ENCODE measurements at regions of chr4 and their contacts with region 1.

Region 1: GRCh38 chr4:151362404-151363164 is 37.2 kb upstream of the SH3D19 start:
- DNase-seq: peak; percentile 89
- H3K4me3 ChIP-seq: no peak overlapping the region
- H3K27ac ChIP-seq: no peak overlapping the region
- H3K4me1 ChIP-seq: peaks cover 3% of the 10 kb centered on the region
- H3K27me3 ChIP-seq: no peaks in the 10 kb centered on the region
- CTCF ChIP-seq: peak; percentile 98

Region 2: DNA sequence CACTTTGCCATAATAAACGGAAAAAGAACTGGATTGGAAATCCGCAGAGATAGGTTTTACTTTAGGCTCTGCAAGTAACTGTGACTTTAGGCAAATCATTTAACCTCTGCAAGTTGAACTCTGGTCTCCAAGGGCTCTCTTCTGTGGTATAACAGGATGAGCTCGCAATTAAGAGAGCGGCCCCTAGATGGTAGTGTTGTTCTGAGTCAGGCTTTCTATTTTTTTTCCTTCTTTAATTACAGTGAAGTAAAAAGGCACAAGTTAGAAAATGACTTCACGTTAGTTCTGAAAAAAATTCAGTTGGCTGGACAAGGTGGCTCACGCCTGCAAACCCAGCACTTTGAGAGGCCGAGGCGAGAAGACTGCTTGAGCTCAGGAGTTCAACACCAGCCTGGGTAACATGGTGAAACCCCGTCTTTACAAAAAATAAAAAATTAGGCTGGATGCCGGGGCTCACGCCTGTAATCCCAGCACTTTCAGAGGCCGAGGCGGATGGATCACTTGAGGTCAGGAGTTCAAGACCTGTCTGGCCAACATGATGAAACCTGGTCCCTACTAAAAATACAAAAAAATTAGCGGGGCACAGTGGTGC is 245.1 kb before region 1 on chr4:
- intact Hi-C with region 1: loop called (anchors 5 kb)
- DNase-seq: peak; percentile 64
- H3K4me3 ChIP-seq: no peak overlapping the region
- H3K27ac ChIP-seq: no peak overlapping the region
- H3K4me1 ChIP-seq: no peaks in the 10 kb centered on the region
- H3K27me3 ChIP-seq: no peaks in the 10 kb centered on the region
- CTCF ChIP-seq: peak; percentile 74

Region 3: GRCh38 chr4:151184523-151185458 is 177.8 kb before region 1 on chr4:
- intact Hi-C with region 1: no loop called
- DNase-seq: no peak
- H3K4me3 ChIP-seq: no peak overlapping the region
- H3K27ac ChIP-seq: no peak overlapping the region
- H3K4me1 ChIP-seq: no peaks in the 10 kb centered on the region
- H3K27me3 ChIP-seq: no peaks in the 10 kb centered on the region
- CTCF ChIP-seq: no peak

Region 4: DNA sequence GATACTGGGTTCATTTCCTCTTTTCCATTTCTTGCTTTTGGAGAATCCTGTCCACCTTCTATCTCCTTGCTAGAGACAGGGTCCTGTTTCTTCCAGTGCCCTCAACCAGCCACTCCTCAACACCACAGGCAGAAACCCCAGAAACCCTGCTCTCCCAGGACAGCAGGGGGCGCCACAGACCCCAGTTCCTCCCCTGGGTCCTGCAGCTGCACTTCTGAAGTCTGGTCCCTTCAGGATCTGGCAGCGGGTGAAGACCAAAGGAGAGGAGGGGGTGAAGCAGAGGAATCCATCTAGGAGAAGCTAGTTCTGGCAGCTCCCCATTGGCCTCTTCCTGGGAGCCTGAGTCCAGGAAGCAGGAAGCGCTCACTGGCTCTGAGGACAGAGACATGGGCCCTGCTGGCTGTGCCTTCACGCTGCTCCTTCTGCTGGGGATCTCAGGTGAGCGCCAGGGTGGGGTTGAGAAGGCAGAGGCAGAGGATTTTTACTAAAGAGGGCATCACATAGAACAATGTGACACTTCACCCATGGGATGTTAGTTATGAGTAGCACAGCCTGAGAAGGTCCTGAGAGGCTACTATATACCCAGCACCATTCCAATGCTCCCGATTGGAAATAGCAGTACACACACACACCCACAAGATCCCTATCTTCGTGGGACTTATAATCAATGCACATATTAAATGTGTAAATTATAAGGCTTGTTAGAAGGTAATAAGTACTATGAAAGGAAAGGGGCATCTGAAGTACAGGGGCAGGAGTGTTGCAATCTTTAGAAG is 85.6 kb before region 1 on chr4 and contains the start of gene PRSS48:
- intact Hi-C with region 1: loop called (anchors 2 kb)
- DNase-seq: peak; percentile 80
- H3K4me3 ChIP-seq: no peak within 1 kb of the TSS
- H3K27ac ChIP-seq: no peak within 1 kb of the TSS
- H3K4me1 ChIP-seq: no peaks in the 10 kb centered on the region
- H3K27me3 ChIP-seq: no peaks in the 10 kb centered on the region
- CTCF ChIP-seq: peak; percentile 64
- total RNA-seq, gene PRSS48: not detected